Activated CD4-positive, alpha-beta memory T cell treated with anti-CD3 and anti-CD28 coated beads for 36 hours (primary cell): ENCODE measurements at regions of chr11 and their contacts with region 1.

Region 1: DNA sequence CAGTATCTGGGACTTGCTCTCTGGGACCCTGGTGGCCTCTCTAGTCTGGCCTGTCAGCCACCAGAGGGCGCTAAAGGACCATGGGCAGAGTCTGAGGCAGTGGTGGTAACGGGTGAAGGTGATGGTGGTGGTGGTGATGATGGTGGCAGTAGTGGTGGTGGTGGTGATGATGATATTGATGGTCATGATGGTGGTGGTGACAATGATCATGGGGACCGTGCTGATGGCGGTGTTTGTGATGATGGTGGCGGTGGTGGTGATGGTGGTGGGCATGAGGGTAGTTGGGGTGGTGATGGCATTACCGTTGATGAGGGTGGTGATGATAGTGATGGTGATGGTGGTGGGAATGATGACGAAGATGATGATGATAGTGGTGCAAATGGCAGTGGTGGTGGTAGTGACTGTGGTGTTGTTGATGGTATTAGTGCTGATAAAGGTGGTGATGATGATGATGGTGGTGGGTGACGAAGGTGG is 16.0 kb downstream of the TRPM5 start:
- DNase-seq: peak; percentile 87
- H3K4me3 Mint-ChIP-seq: no peak overlapping the region
- H3K27ac Mint-ChIP-seq: no peak overlapping the region
- H3K4me1 Mint-ChIP-seq: no peaks in the 10 kb centered on the region
- H3K27me3 Mint-ChIP-seq: no peaks in the 10 kb centered on the region

Region 2: DNA sequence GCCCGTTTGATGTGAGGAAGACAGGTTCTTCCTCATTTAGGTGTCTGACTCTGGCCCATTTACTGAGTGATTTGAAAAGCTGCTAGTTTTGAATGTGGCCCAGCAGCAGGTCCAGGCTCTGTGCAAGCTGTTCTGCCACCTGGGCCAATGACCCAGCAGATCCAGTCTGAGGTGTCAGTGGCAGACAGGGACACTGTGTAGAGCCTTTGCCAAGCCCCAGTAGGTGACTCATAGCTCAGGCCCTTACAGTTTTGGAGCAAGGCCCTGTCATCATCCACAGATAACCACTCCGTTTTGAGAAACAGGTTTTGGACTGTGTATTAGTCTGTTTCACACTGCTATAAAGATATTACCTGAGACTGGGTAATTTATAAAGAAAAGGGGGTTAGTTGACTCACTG is 102.6 kb before region 1 on chr11:
- CTCF ChIA-PET with region 1: no interaction called
- POLR2A ChIA-PET with region 1: no interaction called
- intact Hi-C with region 1: no loop called
- DNase-seq: no peak
- H3K4me3 Mint-ChIP-seq: no peak overlapping the region
- H3K27ac Mint-ChIP-seq: no peak overlapping the region
- H3K4me1 Mint-ChIP-seq: no peaks in the 10 kb centered on the region
- H3K27me3 Mint-ChIP-seq: peaks cover 17% of the 10 kb centered on the region

Region 3: DNA sequence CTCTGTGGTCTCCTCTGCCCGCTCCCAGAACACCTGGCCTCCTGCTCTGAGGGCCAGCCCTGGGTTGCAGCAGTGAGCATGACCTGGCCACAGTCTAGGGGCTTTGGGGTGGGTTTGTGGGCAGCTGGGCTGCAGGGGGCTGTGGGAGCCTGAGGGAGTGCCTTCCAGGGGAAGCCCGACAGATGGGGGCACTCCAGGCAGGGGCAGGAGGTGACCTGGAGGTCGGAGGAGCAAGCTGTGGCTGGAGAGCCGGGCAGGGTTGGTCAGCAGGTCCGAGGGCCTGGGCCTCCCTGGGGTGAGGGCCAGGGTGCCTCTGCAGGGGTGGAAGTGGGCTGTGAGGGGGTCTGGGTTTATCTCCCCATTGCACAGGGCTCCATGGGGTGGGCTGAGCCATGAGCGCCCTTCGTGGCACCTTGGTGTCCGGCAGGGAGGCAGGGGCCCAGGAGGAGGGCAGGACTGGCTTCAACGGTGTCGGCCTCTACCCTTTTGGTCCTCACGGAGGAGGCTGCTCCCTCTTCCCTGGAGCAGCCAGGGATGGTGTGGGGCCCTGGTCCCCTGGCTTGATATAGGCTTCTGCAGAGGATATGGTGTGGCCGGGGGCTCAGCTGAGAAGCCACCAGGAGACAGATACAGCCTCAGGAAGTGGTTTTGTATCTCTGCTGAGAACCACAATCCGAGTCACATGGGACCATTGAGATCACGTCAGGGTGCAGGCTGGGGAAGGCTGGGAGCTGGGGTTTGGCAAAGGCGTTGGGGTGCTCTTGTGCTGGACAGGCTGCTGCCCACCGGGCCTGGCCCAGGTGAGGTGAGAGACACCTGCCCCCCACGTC is 38.7 kb after region 1 on chr11:
- CTCF ChIA-PET with region 1: no interaction called
- POLR2A ChIA-PET with region 1: no interaction called
- intact Hi-C with region 1: no loop called
- DNase-seq: peak; percentile 72
- H3K4me3 Mint-ChIP-seq: no peak overlapping the region
- H3K27ac Mint-ChIP-seq: no peak overlapping the region
- H3K4me1 Mint-ChIP-seq: peaks cover 37% of the 10 kb centered on the region
- H3K27me3 Mint-ChIP-seq: no peaks in the 10 kb centered on the region

Region 4: GRCh38 chr11:2526808-2527381 is 98.5 kb after region 1 on chr11:
- CTCF ChIA-PET with region 1: interaction called, 121 read pairs
- POLR2A ChIA-PET with region 1: interaction called, 3 read pairs
- intact Hi-C with region 1: loop called (anchors 1 kb)
- DNase-seq: no peak
- H3K4me3 Mint-ChIP-seq: no peak overlapping the region
- H3K27ac Mint-ChIP-seq: no peak overlapping the region
- H3K4me1 Mint-ChIP-seq: peaks cover 19% of the 10 kb centered on the region
- H3K27me3 Mint-ChIP-seq: no peaks in the 10 kb centered on the region

Region 5: GRCh38 chr11:2892215-2893020 is 464.1 kb after region 1 on chr11:
- CTCF ChIA-PET with region 1: interaction called, 8 read pairs
- POLR2A ChIA-PET with region 1: no interaction called
- intact Hi-C with region 1: loop called (anchors 2 kb)
- DNase-seq: peak; percentile 80
- H3K4me3 Mint-ChIP-seq: peak overlapping the region; percentile 80
- H3K27ac Mint-ChIP-seq: peak overlapping the region; percentile 84
- H3K4me1 Mint-ChIP-seq: peaks cover 10% of the 10 kb centered on the region
- H3K27me3 Mint-ChIP-seq: no peaks in the 10 kb centered on the region